ENCODE measurements at regions of chr18 and their contacts with region 1.

Region 1: DNA sequence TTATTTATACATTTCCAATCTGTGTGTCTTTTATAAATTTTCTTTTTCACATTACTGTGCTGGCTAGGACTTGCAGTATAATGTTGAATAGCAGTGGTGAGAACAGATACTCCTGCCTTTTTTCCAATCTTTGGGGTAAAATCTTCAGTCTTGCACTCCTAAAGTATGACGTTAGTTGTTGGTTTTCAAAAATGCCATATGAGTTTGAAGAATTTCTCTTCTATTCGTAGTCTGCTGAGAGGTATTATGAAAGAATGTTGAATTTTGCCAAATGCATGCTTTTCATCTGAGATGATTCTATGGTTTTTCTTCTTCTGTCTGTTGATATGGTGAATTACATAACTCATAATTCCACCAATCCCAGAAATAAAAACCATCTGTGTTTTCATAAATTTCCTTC is 335.3 kb upstream of the CHST9 start:
- DNase-seq: no peak
- ATAC-seq: no peak
- H3K4me3 ChIP-seq: no peak overlapping the region
- H3K27ac ChIP-seq: no peak overlapping the region
- H3K4me1 ChIP-seq: peaks cover 0 to 5% (median 0%) of the 10 kb centered on the region in 9 donors
- H3K27me3 ChIP-seq: no peaks in the 10 kb centered on the region
- CTCF ChIP-seq: no peak

Region 2: DNA sequence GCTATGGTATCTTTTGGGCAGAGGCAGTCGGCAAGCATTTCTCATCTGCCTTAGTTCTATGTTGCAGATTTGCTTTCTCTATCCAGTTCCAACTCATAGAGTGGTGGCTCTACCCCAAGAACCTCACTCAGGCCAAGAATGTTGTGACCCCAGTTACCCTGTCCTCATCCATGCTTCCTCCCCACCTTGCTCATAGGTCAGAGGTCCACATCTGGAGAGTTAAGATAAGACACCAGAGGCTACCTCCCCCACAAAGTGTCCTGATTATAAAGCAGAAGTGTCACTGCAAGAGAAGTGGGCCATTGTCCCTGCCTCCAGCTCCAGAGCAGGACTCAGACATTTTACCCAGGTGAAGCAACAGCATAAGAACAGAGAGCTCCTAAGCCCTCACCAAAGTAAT is 58.4 kb before region 1 on chr18:
- intact Hi-C with region 1: loop called in 1 of 10 experiments (anchors 10 kb)
- DNase-seq: no peak
- ATAC-seq: no peak
- H3K4me3 ChIP-seq: no peak overlapping the region
- H3K27ac ChIP-seq: no peak overlapping the region
- H3K4me1 ChIP-seq: no peaks in the 10 kb centered on the region
- H3K27me3 ChIP-seq: no peaks in the 10 kb centered on the region
- CTCF ChIP-seq: no peak

Region 3: GRCh38 chr18:27599202-27599829 is 78.9 kb after region 1 on chr18:
- intact Hi-C with region 1: no loop called
- DNase-seq: peak in 1 of 2 donors; percentile 9
- ATAC-seq: peak in 1 of 8 donors; percentile 37
- H3K4me3 ChIP-seq: no peak overlapping the region
- H3K27ac ChIP-seq: no peak overlapping the region
- H3K4me1 ChIP-seq: peaks cover 0 to 9% (median 0%) of the 10 kb centered on the region in 9 donors
- H3K27me3 ChIP-seq: no peaks in the 10 kb centered on the region
- CTCF ChIP-seq: peak; percentile 40 to 86 (median 82)

Region 4: GRCh38 chr18:28875059-28875458 is 1354.7 kb after region 1 on chr18:
- intact Hi-C with region 1: no loop called
- DNase-seq: no peak
- ATAC-seq: no peak
- H3K4me3 ChIP-seq: no peak overlapping the region
- H3K27ac ChIP-seq: no peak overlapping the region
- H3K4me1 ChIP-seq: no peaks in the 10 kb centered on the region
- H3K27me3 ChIP-seq: no peaks in the 10 kb centered on the region
- CTCF ChIP-seq: no peak

Measured in heart right ventricle (tissue), 16 donors.